PC-9 (cell line): ENCODE measurements at regions of chr17 and their contacts with region 1.

Region 1: GRCh38 chr17:45021607-45022287 is 29.7 kb downstream of the DCAKD start:
- DNase-seq: peak in 1 of 2 experiments; percentile 56
- H3K4me3 ChIP-seq: no peak overlapping the region
- H3K27ac ChIP-seq: no peak overlapping the region
- H3K4me1 ChIP-seq: peaks cover 4% of the 10 kb centered on the region
- H3K27me3 ChIP-seq: 0 out of 2 replicates have a peak, but pooled peaks cover 4% of the 10 kb centered on the region
- CTCF ChIP-seq: peak; percentile 72

Region 2: DNA sequence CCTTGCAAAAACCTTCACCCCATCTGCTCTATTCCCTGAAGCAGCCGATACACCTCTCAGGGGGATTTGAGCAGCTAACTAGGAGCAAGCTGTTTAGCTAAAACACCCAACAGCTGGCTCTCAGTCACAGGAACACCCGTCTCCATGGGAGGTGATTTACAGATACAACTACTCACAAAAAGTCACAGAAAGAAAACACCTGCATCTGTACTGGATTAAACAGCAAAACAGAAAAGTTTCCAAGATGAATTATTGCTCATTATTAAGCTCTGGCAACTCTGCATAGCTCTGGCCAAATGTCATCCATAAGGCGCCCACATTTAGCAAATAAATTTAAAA is 214.0 kb before region 1 on chr17:
- CTCF ChIA-PET with region 1: no interaction called
- POLR2A ChIA-PET with region 1: no interaction called
- intact Hi-C with region 1: no loop called
- DNase-seq: no peak
- H3K4me3 ChIP-seq: no peak overlapping the region
- H3K27ac ChIP-seq: no peak overlapping the region
- H3K4me1 ChIP-seq: no peaks in the 10 kb centered on the region
- H3K27me3 ChIP-seq: no peaks in the 10 kb centered on the region
- CTCF ChIP-seq: no peak

Region 3: DNA sequence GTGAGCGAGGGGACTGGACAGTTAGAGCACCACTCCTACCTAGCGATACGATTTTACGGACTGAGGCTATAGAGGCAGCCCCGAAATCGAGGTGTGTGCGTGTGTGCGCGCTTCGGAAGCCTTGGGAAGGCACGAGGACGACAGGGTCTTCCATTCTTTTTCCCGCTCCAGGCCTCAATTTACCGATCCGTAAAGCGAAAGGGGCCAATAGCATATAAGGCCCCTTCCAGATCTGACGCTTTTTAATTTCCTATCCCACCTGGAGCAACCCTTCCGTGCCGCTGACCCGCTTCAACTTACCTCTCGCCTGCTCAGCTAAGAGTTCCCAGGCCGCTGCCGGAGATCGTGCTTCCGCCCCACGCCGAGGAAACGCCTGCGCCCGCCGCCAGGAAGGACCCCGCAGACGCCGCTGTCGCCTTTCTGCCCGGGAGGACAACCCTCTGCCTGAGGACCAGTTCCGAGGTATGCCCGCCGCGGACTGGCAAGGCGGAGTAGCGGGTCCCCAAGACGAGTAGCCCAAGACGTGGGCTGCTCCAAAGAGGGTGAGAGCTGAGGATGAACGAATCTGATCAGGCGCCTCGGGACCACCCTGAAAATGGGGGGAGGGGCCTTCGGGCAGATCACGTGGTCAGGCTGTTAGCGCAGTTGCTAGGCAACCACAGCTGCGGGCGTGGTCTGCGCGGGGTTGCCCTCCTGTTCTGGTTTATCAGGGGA is 122.5 kb before region 1 on chr17 and contains the start of gene EFTUD2:
- CTCF ChIA-PET with region 1: no interaction called
- POLR2A ChIA-PET with region 1: no interaction called
- intact Hi-C with region 1: loop called (anchors 2 kb)
- DNase-seq: peak; percentile 71 to 89
- H3K4me3 ChIP-seq: peak within 1 kb of the TSS; percentile 83
- H3K27ac ChIP-seq: peak within 1 kb of the TSS; percentile 91
- H3K4me1 ChIP-seq: peaks cover 38% of the 10 kb centered on the region
- H3K27me3 ChIP-seq: no peaks in the 10 kb centered on the region
- CTCF ChIP-seq: no peak
- total RNA-seq, gene EFTUD2: 111 and 126 TPM in 2 replicates

Region 4: GRCh38 chr17:44941712-44942331 is 79.9 kb before region 1 on chr17:
- CTCF ChIA-PET with region 1: interaction called, 4 read pairs
- POLR2A ChIA-PET with region 1: no interaction called
- intact Hi-C with region 1: loop called (anchors 5 kb)
- DNase-seq: no peak
- H3K4me3 ChIP-seq: no peak overlapping the region
- H3K27ac ChIP-seq: peak overlapping the region; percentile 26; the same call in 1 of the 2 replicates
- H3K4me1 ChIP-seq: peaks cover 53% of the 10 kb centered on the region
- H3K27me3 ChIP-seq: no peaks in the 10 kb centered on the region
- CTCF ChIP-seq: no peak

Region 5: DNA sequence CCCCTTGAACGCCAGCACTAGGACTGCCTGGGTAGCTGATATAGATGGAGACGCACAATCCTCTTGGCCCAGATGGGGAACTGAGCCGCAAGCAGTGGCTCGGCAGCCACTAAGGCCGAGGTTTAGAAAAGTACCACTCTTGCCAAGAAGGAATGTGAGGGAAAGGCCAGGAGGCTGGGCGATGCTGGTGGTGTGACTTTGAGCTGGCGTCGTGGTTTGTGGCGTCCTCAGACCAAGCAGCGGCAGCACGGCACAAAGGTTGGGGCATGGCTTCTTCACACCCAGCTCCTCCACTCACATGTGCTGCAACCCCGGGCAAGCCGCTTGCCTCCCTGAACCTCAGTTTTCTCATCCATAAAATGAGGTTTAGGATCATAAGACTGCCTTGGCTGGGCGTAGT is 14.1 kb after region 1 on chr17:
- CTCF ChIA-PET with region 1: interaction called, 10 read pairs
- POLR2A ChIA-PET with region 1: no interaction called
- intact Hi-C with region 1: no loop called
- DNase-seq: no peak
- H3K4me3 ChIP-seq: no peak overlapping the region
- H3K27ac ChIP-seq: no peak overlapping the region
- H3K4me1 ChIP-seq: no peaks in the 10 kb centered on the region
- H3K27me3 ChIP-seq: no peaks in the 10 kb centered on the region
- CTCF ChIP-seq: no peak